Activated CD4-positive, alpha-beta memory T cell treated with anti-CD3 and anti-CD28 coated beads for 36 hours (primary cell): ENCODE measurements at regions of chr1 and their contacts with region 1.

Region 1: GRCh38 chr1:166910396-166910994 is 34.4 kb upstream of the TADA1 start:
- DNase-seq: peak; percentile 86
- H3K4me3 Mint-ChIP-seq: no peak overlapping the region
- H3K27ac Mint-ChIP-seq: no peak overlapping the region
- H3K4me1 Mint-ChIP-seq: peaks cover 12% of the 10 kb centered on the region
- H3K27me3 Mint-ChIP-seq: no peaks in the 10 kb centered on the region

Region 2: DNA sequence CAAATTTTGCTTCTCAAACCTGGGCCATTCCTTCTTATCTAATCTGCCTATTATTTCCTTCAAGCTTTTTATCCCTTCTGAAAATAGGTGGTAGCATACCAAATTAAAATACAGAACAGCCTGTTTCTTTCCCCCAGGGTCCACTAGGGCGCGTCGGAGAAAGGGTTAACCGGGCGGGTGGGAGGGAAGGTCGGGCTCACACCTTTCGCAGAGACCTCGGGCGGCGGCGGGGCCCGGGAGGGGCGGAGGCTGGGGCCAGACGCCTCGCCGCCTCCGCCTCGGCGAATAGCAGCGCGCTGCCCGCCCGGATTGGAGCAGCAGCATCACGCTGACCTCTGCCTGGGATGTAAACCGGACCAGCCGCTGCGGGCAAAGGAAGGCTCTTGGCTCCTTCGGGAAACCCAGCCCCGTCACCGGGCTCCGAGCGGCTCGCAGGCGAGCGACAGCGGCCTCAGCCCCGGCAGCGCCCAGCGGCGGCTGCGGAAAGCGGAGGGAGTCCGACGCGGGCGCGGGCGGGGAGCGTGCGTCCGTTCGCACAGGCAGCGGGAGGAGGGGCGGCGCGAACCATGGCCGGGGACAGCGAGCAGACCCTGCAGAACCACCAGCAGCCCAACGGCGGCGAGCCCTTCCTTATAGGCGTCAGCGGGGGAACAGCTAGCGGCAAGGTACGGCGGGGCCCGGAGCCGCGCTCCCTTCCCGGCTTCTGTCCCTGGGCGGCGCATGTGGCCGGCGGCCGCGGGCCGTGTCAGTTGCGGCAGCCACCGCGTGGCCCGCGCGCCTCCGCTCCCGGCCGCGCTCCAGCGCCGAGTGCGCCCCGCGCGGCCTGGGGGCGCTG is 1083.0 kb before region 1 on chr1 and contains the start of gene UCK2:
- CTCF ChIA-PET with region 1: no interaction called
- POLR2A ChIA-PET with region 1: no interaction called
- intact Hi-C with region 1: no loop called
- DNase-seq: peak; percentile 75
- H3K4me3 Mint-ChIP-seq: peak within 1 kb of the TSS; percentile 91
- H3K27ac Mint-ChIP-seq: peak within 1 kb of the TSS; percentile 88
- H3K4me1 Mint-ChIP-seq: peaks cover 9% of the 10 kb centered on the region
- H3K27me3 Mint-ChIP-seq: no peaks in the 10 kb centered on the region
- total RNA-seq, gene UCK2: 60.1 to 61.8 TPM

Region 3: DNA sequence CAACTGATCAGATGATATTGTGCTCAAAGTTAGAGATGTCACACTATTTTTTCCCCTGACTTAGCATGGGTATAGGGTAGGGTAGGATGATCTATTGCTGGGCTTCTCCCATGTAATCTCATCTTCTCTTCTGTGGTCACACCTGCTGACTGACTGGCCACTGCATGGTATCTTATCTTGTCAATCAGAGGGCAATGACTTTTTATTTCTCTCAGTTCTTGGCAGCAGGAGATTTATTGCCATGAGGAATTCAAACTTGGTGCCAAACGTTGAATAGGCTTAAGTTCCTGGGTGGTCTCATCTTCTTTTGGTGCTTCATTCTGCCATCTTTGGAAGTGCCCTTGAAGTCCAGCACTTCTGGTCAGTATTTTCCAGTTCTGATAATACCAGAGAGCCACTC is 297.6 kb before region 1 on chr1:
- CTCF ChIA-PET with region 1: no interaction called
- POLR2A ChIA-PET with region 1: no interaction called
- intact Hi-C with region 1: no loop called
- DNase-seq: no peak
- H3K4me3 Mint-ChIP-seq: no peak overlapping the region
- H3K27ac Mint-ChIP-seq: no peak overlapping the region
- H3K4me1 Mint-ChIP-seq: no peaks in the 10 kb centered on the region
- H3K27me3 Mint-ChIP-seq: no peaks in the 10 kb centered on the region

Region 4: DNA sequence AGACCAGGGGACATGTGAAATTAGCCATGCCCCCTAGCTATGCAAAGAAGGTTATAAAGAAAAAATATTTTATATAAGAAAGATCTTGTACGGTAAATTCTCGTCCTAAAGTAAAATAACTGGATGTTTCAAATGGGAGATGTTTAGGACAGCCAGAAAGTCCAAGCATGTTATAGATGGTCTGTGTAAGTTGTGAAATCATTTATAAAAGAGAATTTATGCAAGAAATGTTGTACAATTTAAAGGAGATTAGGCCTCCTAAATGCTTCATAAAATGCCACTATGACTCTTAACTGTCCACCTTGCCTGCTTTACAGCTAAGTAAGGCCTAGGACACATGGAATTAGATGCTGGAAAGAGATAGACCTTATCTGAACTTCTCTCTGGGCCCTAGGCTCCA is 189.3 kb before region 1 on chr1:
- CTCF ChIA-PET with region 1: no interaction called
- POLR2A ChIA-PET with region 1: no interaction called
- intact Hi-C with region 1: no loop called
- DNase-seq: no peak
- H3K4me3 Mint-ChIP-seq: no peak overlapping the region
- H3K27ac Mint-ChIP-seq: no peak overlapping the region
- H3K4me1 Mint-ChIP-seq: no peaks in the 10 kb centered on the region
- H3K27me3 Mint-ChIP-seq: peaks cover 9% of the 10 kb centered on the region

Region 5: GRCh38 chr1:166838766-166839599 is 71.5 kb before region 1 on chr1 and contains the start of gene POGK:
- CTCF ChIA-PET with region 1: interaction called, 3 read pairs
- POLR2A ChIA-PET with region 1: interaction called, 3 read pairs
- intact Hi-C with region 1: loop called (anchors 2 kb)
- DNase-seq: peak; percentile 92
- H3K4me3 Mint-ChIP-seq: peak within 1 kb of the TSS; percentile 88
- H3K27ac Mint-ChIP-seq: peak within 1 kb of the TSS; percentile 95
- H3K4me1 Mint-ChIP-seq: peaks cover 41% of the 10 kb centered on the region
- H3K27me3 Mint-ChIP-seq: no peaks in the 10 kb centered on the region
- total RNA-seq, gene POGK: 43.0 to 43.1 TPM

Region 6: GRCh38 chr1:166884040-166884642 is 26.4 kb before region 1 on chr1:
- CTCF ChIA-PET with region 1: interaction called, 23 read pairs
- POLR2A ChIA-PET with region 1: no interaction called
- intact Hi-C with region 1: no loop called
- DNase-seq: peak; percentile 61
- H3K4me3 Mint-ChIP-seq: no peak overlapping the region
- H3K27ac Mint-ChIP-seq: no peak overlapping the region
- H3K4me1 Mint-ChIP-seq: peaks cover 14% of the 10 kb centered on the region
- H3K27me3 Mint-ChIP-seq: peaks cover 20% of the 10 kb centered on the region

Region 7: DNA sequence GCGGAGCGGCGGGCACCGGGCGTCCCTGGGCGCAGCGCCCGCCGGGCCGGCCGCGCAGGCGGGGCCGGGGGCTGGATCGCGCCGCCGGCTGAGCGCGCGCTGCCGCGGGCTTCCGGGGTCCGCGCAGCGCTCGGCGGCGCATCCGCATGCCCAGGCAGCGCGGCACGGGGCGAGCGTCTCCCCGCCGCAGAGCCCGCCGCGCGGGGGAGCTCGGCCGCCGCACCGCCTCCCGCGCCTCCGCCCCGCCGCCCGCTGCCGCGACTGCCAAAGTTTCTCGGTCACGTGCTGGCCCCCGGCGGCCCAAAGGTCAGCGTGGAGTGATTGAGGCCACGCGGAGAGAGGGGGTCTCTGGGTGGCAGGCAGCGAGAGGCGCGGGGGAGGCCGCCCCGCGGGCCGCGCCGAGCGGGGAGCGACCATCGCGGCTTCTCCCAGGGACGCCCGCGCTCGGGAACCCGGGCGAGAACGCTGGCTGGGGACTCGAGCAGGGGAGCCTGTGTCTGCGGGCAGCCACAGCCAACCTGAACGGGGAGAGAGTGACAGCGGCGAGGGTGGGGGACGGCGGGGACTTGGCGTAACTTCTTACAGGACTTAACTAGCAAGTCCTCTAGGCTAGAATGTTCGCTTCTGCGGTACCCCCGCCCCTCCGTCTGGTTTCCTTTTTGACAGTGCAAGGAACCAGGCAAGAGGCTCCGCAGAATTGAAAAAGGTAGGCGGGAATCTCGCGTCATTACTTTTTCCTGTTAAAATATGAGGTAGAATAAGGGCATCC is 65.0 kb after region 1 on chr1 and contains the start of gene ILDR2:
- CTCF ChIA-PET with region 1: interaction called, 28 read pairs
- POLR2A ChIA-PET with region 1: interaction called, 3 read pairs
- intact Hi-C with region 1: loop called (anchors 1 kb)
- DNase-seq: peak; percentile 88
- H3K4me3 Mint-ChIP-seq: peak within 1 kb of the TSS; percentile 88
- H3K27ac Mint-ChIP-seq: peak within 1 kb of the TSS; percentile 88
- H3K4me1 Mint-ChIP-seq: peaks cover 47% of the 10 kb centered on the region
- H3K27me3 Mint-ChIP-seq: peaks cover 16% of the 10 kb centered on the region
- total RNA-seq, gene ILDR2: 12.5 to 13.0 TPM

Region 8: DNA sequence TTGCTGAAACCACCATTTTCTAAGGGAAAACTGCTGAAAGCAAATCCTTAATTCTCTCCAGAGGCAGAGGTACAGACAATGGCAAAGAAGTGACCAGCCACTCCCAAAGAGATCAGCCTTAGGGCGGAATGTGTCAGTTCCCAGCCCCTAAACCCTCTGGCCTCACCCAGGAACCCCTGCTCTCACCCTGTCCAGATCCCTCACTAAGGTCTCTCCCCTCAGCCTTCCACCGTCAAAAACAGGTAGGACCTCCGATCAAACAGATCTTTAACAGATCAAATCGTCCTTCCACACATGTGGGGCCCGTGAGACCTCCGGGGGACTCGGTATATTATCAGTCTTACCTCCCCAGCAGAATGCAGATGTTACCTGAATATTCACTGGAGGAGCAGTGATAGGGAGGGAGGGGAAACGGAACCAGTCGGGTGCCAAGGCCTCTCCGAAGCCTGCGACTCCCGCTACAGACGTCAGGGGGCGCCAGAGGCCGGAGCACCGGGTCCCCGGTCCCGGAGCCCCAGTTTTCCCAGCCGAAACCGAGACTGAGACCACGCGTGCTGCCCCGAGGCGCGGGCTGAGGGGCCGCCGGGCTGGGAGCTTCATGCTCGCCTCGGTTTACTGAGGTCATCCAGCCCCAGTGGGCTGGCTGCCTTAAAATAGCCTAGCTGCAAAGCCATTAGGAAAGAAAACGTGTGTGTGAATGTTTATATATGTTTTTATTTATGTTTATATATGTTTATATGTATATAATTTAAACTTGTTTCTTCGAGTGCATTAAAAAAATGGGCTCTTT is 156.0 kb after region 1 on chr1:
- CTCF ChIA-PET with region 1: interaction called, 918 read pairs
- POLR2A ChIA-PET with region 1: no interaction called
- intact Hi-C with region 1: no loop called
- DNase-seq: peak; percentile 83
- H3K4me3 Mint-ChIP-seq: peak overlapping the region; percentile 30
- H3K27ac Mint-ChIP-seq: no peak overlapping the region
- H3K4me1 Mint-ChIP-seq: peaks cover 2% of the 10 kb centered on the region
- H3K27me3 Mint-ChIP-seq: no peaks in the 10 kb centered on the region

Region 9: DNA sequence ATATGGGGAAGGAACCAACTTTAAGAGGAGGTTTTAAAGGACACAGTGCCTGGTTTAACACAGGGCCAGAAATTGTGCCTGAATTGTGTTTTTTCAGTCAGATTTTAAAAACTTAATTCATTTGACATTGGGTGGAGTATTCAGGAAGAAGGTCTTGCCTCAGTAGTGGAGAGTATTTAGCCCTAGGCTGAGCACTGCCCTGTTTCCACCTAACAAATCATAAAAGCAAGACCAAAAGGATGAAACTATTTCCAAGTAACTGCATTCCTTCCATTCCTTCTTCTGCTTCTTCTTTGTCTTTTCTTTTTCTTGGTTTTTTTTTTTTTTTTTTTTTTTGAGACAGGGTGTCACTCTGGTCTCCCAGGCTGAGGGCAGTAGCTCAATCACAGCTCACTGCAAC is 283.2 kb after region 1 on chr1:
- CTCF ChIA-PET with region 1: no interaction called
- POLR2A ChIA-PET with region 1: no interaction called
- intact Hi-C with region 1: no loop called
- DNase-seq: no peak
- H3K4me3 Mint-ChIP-seq: no peak overlapping the region
- H3K27ac Mint-ChIP-seq: no peak overlapping the region
- H3K4me1 Mint-ChIP-seq: peaks cover 13% of the 10 kb centered on the region
- H3K27me3 Mint-ChIP-seq: peaks cover 17% of the 10 kb centered on the region

Region 10: GRCh38 chr1:167553136-167554027 is 642.9 kb after region 1 on chr1 and contains the start of gene CREG1:
- CTCF ChIA-PET with region 1: interaction called, 3 read pairs
- POLR2A ChIA-PET with region 1: no interaction called
- intact Hi-C with region 1: loop called (anchors 10 kb)
- DNase-seq: peak; percentile 94
- H3K4me3 Mint-ChIP-seq: peak within 1 kb of the TSS; percentile 84
- H3K27ac Mint-ChIP-seq: no peak within 1 kb of the TSS
- H3K4me1 Mint-ChIP-seq: peaks cover 35% of the 10 kb centered on the region
- H3K27me3 Mint-ChIP-seq: no peaks in the 10 kb centered on the region
- total RNA-seq, gene CREG1: 13.5 to 14.6 TPM